ENCODE measurements at regions of chr1 and their contacts with region 1.

Region 1: GRCh38 chr1:178048426-178048825 is 45.5 kb upstream of the RASAL2 start:
- DNase-seq: no peak
- H3K4me3 ChIP-seq: no peak overlapping the region
- H3K27ac ChIP-seq: no peak overlapping the region
- H3K4me1 ChIP-seq: peaks cover 0 to 12% (median 6%) of the 10 kb centered on the region in 4 donors
- H3K27me3 ChIP-seq: no peaks in the 10 kb centered on the region
- CTCF ChIP-seq: no peak
- EP300 ChIP-seq: no peak
- POLR2A ChIP-seq: no peak

Region 2: DNA sequence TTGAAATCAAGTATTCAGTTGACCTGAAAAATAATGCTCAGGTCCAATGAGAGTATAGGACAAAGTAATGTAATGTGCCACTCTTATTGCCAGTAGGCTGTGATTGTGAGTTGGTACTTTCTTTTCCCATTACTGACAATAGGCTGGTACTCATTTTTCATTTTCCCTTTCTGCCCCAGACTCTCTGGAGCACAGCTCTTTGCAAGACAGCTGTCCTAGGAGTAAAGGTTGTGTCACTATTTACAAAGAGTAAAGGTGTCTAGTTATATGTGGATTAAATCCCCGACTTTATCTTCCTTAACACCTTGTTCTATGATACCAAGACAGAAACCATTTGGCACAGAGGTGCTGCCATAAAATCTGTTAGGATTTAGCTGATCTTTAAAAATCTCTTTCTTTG is 13.2 kb after region 1 on chr1:
- in situ Hi-C with region 1: no loop called
- intact Hi-C with region 1: loop called (anchors 1 kb)
- DNase-seq: no peak
- H3K4me3 ChIP-seq: peak overlapping the region in 1 of 4 donors; percentile 16
- H3K27ac ChIP-seq: peak overlapping the region; percentile 25 to 66 (median 43)
- H3K4me1 ChIP-seq: peaks cover 0 to 38% (median 17%) of the 10 kb centered on the region in 4 donors
- H3K27me3 ChIP-seq: no peaks in the 10 kb centered on the region
- CTCF ChIP-seq: no peak
- EP300 ChIP-seq: no peak
- POLR2A ChIP-seq: no peak

Region 3: DNA sequence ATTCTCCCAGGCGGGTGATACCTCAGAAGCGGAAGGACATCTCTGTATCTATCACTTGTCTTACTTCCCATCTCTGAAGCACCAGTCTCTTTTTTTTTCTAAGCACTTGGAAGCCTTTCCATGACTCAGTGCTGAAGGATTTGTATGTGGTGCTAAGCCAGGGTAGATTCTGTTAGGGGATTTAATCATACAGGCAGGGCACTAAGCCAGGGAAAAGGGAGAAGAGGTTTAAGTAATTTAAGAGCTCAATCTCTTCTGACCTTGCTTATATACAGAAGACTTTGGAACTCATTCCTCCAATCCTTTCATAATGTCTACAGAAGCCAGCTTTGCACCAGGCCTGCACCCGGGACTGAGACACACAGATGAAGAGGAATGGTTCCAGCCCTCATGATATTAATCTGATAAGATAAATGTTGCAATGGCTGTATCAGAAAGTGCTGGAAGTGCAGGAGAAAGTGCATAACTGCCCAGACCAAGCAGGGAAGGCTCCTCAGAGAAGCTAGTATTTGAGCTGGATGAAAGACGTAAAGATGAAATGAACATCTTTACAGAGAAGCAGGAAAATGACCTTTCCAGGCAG is 1705.7 kb after region 1 on chr1:
- in situ Hi-C with region 1: no loop called
- intact Hi-C with region 1: no loop called
- DNase-seq: no peak
- H3K4me3 ChIP-seq: no peak overlapping the region
- H3K27ac ChIP-seq: peak overlapping the region in 3 of 4 donors; percentile 39 to 58 (median 55)
- H3K4me1 ChIP-seq: no peaks in the 10 kb centered on the region
- H3K27me3 ChIP-seq: no peaks in the 10 kb centered on the region
- CTCF ChIP-seq: no peak
- EP300 ChIP-seq: no peak
- POLR2A ChIP-seq: no peak

Measured in transverse colon (tissue), 4 donors.